ENCODE measurements at regions of chr1 and their contacts with region 1.

Region 1: GRCh38 chr1:17011439-17012307 is at the start of gene ATP13A2:
- DNase-seq: peak; percentile 62 to 92 (median 81)
- ATAC-seq: peak; percentile 99
- H3K4me3 ChIP-seq: peak within 1 kb of the TSS; percentile 61 to 78
- H3K4me3 Mint-ChIP-seq: peak within 1 kb of the TSS; percentile 84
- H3K27ac ChIP-seq: peak within 1 kb of the TSS in 1 of 2 experiments; percentile 30
- H3K27ac Mint-ChIP-seq: peak within 1 kb of the TSS; percentile 60
- H3K4me1 ChIP-seq: peaks cover 17% of the 10 kb centered on the region
- H3K4me1 Mint-ChIP-seq: peaks cover 19% of the 10 kb centered on the region
- H3K27me3 ChIP-seq: no peaks in the 10 kb centered on the region
- H3K27me3 Mint-ChIP-seq: no peaks in the 10 kb centered on the region
- CTCF ChIP-seq: no peak
- total RNA-seq, gene ATP13A2: 23.4 to 24.2 TPM

Region 2: DNA sequence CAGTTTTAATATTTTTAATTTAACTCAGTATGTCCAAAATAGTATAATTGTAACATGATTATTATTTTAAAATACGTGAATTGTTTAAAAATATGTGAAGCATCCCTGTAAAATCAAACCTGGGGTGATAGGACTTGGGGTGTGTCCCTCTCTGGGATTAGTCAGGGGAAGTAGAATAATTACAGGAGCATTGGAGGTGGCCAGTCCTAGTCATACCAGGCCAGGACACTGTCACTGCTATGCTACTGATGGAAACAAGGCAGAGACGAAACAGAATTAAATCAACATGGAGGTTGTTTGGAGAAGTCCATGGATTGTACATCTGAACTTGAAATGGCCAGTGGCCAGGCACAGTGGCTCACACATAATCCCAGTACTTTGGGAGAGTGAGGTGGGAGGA is 627.8 kb before region 1 on chr1:
- CTCF ChIA-PET with region 1: no interaction called
- POLR2A ChIA-PET with region 1: no interaction called
- intact Hi-C with region 1: loop called in 1 of 2 experiments (anchors 5 kb)
- DNase-seq: no peak
- ATAC-seq: no peak
- H3K4me3 ChIP-seq: no peak overlapping the region
- H3K4me3 Mint-ChIP-seq: no peak overlapping the region
- H3K27ac ChIP-seq: no peak overlapping the region
- H3K27ac Mint-ChIP-seq: no peak overlapping the region
- H3K4me1 ChIP-seq: peaks cover 46% of the 10 kb centered on the region
- H3K4me1 Mint-ChIP-seq: peaks cover 67% of the 10 kb centered on the region
- H3K27me3 ChIP-seq: no peaks in the 10 kb centered on the region
- H3K27me3 Mint-ChIP-seq: no peaks in the 10 kb centered on the region
- CTCF ChIP-seq: no peak

Region 3: DNA sequence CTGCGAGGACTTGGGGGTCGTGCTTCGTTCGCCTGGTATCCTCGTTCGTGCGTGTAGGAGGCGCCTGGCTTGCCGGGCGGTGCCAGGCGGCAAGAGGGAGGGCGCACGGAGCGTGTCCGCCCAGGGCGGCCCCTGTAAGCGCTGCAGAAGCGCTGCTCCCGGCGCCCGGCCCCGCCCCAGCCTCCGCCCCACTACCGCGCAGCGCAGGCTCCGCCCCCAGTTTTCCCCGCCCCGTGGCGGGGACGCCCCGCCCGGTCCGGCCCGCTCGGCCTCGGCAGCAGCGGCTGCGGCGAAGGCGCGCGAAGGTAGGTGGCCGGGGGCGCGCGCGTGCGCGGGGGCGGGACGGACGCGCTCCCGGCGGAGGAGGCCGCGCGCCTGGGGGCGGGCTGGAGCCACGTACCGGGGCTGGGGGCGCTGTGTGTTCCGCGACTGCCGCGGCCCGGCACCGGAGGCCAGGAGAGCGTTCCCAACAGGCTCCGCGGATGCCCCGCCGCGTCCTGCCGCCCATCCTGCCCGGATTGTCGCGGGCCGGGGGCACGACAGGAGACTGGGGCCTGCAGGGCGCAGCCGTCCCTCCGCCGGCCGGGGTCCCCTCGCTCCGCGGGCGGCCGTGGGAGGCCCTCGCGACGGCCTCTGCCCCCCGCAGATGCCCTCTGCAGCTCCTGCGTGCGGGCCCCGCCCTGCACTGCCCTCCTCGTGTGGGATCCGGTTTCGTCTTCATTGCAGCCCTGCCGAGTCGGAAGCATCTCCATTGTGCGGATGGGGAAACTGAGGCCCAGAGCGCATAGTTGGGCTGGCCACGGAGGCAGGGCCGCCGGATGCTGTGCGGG is 97.6 kb before region 1 on chr1:
- CTCF ChIA-PET with region 1: no interaction called
- POLR2A ChIA-PET with region 1: no interaction called
- intact Hi-C with region 1: loop called (anchors 2 to 5 kb)
- DNase-seq: peak; percentile 89 to 99 (median 97)
- ATAC-seq: peak; percentile 98
- H3K4me3 ChIP-seq: peak overlapping the region; percentile 62 to 76
- H3K4me3 Mint-ChIP-seq: peak overlapping the region; percentile 82
- H3K27ac ChIP-seq: peak overlapping the region; percentile 62 to 70
- H3K27ac Mint-ChIP-seq: peak overlapping the region; percentile 60
- H3K4me1 ChIP-seq: peaks cover 28% of the 10 kb centered on the region
- H3K4me1 Mint-ChIP-seq: peaks cover 28% of the 10 kb centered on the region
- H3K27me3 ChIP-seq: no peaks in the 10 kb centered on the region
- H3K27me3 Mint-ChIP-seq: no peaks in the 10 kb centered on the region
- CTCF ChIP-seq: no peak

Region 4: DNA sequence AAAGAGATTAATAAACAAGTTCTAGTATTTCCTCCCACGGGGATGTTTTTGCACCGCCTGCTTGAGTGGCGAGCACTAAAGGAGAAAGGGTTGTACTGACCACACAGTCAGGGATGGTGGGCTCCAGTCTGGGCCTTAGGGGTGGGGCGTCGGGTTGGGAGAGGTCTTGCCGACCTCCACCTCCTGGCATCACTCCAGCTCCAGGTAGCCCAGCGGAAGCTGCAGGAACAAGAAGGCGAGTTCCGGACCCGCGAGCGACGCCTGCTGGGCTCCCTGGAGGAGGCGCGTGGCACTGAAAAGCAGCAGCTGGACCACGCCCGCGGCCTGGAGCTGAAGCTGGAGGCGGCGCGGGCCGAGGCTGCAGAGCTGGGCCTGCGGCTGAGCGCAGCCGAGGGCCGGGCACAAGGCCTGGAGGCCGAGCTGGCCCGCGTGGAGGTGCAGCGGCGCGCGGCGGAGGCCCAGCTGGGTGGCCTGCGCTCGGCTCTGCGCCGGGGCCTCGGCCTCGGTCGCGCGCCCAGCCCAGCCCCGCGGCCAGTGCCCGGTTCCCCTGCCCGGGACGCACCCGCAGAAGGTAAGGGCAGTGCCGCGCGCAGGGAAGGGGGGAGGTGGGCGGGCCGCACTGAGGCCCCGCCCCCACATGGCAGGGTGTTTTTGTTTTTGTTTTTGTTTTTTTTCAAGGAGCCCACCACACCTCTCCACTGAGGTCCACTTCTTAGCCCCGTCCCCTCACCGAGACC is 50.9 kb before region 1 on chr1:
- CTCF ChIA-PET with region 1: interaction called, 4 read pairs
- POLR2A ChIA-PET with region 1: no interaction called
- intact Hi-C with region 1: loop called in 1 of 2 experiments (anchors 5 kb)
- DNase-seq: peak; percentile 37 to 83 (median 76)
- ATAC-seq: peak; percentile 87
- H3K4me3 ChIP-seq: peak overlapping the region; percentile 39 to 41
- H3K4me3 Mint-ChIP-seq: peak overlapping the region; percentile 80
- H3K27ac ChIP-seq: no peak overlapping the region
- H3K27ac Mint-ChIP-seq: no peak overlapping the region
- H3K4me1 ChIP-seq: no peaks in the 10 kb centered on the region
- H3K4me1 Mint-ChIP-seq: peaks cover 10% of the 10 kb centered on the region
- H3K27me3 ChIP-seq: no peaks in the 10 kb centered on the region
- H3K27me3 Mint-ChIP-seq: no peaks in the 10 kb centered on the region
- CTCF ChIP-seq: peak; percentile 73

Region 5: GRCh38 chr1:17053685-17054410 is 42.2 kb after region 1 on chr1 and contains the start of gene SDHB:
- CTCF ChIA-PET with region 1: no interaction called
- POLR2A ChIA-PET with region 1: no interaction called
- intact Hi-C with region 1: loop called (anchors 1 kb)
- DNase-seq: peak; percentile 97 to 100 (median 99)
- ATAC-seq: peak; percentile 98
- H3K4me3 ChIP-seq: peak within 1 kb of the TSS; percentile 53 to 90
- H3K4me3 Mint-ChIP-seq: peak within 1 kb of the TSS; percentile 99
- H3K27ac ChIP-seq: peak within 1 kb of the TSS; percentile 67 to 84
- H3K27ac Mint-ChIP-seq: peak within 1 kb of the TSS; percentile 98
- H3K4me1 ChIP-seq: peaks cover 16% of the 10 kb centered on the region
- H3K4me1 Mint-ChIP-seq: peaks cover 33% of the 10 kb centered on the region
- H3K27me3 ChIP-seq: no peaks in the 10 kb centered on the region
- H3K27me3 Mint-ChIP-seq: peaks cover 6% of the 10 kb centered on the region
- CTCF ChIP-seq: no peak
- total RNA-seq, gene SDHB: 66.2 to 71.8 TPM